A549 (cell line): ENCODE measurements at regions of chr16 and their contacts with region 1.

Region 1: DNA sequence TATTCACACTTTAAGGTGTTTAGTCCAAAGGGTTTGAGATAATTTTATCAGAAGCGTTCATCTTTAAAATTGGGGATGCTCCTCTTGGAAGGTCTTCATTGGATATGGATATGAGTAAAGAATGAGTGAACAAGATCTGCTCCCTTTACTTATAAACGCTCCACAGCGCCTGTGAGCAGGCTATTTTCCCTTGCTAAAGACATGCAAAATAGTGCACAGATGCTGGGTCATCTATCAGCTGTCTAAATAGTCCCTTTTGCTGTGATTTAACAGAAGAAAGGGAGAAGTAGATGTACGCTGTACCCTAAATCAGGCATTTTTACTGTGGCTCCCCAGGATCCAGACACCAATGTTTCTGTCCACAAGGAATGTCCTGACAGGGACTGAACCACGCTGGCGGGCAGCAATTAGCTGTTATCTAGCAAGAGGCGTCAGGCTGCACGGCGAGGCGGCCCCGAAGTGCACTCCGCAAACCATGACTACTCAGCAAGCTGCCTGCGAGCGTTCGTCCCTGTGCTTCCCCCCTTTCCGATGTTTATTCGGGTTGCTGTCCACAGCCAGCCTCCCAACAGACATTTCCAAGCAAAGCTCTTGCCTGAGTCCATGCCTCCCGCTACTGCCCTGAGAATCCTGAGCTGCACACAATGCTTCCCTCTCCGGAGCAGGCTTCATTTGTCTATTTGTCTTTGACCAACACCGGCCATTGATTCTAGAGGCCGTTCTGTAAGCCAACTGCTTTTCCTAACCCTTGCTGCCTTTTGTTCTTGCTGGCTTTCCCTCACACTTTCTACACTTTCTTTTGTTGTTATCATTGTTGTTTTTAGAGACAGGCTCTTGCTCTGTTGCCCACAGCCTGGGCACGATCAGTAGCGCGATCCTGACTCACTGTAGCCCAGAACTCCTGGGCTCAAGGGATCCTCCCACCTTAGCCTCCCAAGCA is 55.7 kb upstream of the CNEP1R1 start:
- DNase-seq: no peak
- ATAC-seq: no peak
- H3K4me3 ChIP-seq: no peak overlapping the region
- H3K27ac ChIP-seq: no peak overlapping the region
- H3K4me1 ChIP-seq: no peaks in the 10 kb centered on the region
- CTCF ChIP-seq: no peak
- EP300 ChIP-seq: no peak
- POLR2A ChIP-seq: no peak
- RAD21 ChIP-seq: no peak

Region 2: DNA sequence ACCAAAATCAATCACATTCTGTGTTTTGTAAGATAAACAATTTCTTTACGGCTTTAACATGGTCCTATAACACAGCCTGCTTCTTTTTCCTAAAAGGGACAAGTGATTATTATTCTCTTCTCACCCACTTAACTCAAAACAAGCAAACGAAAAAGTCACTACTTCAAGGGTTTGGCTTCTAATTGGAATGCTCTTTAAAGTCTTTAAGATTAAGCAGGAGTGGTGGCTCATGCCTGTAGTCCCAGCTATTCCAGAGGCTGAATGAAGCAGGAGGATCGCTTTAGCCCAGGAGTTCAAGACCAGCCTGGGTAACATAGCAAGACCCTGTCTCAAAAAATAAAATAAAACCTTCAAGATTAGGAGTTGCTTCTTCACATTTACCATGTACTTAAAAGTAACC is 10.9 kb before region 1 on chr16:
- CTCF ChIA-PET with region 1: interaction called, 11 read pairs
- POLR2A ChIA-PET with region 1: no interaction called
- DNase-seq: no peak
- ATAC-seq: no peak
- H3K4me3 ChIP-seq: no peak overlapping the region
- H3K27ac ChIP-seq: no peak overlapping the region
- H3K4me1 ChIP-seq: no peaks in the 10 kb centered on the region
- CTCF ChIP-seq: no peak
- EP300 ChIP-seq: no peak
- POLR2A ChIP-seq: no peak
- RAD21 ChIP-seq: no peak

Region 3: DNA sequence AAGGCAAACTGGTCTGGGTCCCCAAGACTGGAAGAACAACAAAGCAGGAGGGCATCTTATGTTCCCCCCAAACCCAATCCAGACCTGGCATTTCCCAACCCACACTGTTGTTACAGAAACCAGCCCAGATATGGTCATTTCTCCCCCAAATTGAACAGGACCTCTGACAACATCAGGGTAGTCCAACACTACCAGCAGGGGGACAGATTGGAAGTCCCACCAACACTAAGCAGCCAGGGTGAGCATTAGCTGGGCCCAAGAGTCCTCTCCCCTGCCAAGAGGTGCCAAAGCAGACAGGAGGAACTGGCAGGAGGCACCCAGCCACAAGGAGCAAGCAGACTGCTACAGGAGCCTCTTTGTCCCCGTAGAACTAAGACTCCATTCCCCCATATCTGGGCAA is 26.4 kb after region 1 on chr16:
- CTCF ChIA-PET with region 1: no interaction called
- POLR2A ChIA-PET with region 1: no interaction called
- DNase-seq: no peak
- ATAC-seq: peak in 1 of 2 experiments; percentile 51; a peak in 2 of 6 replicates
- H3K4me3 ChIP-seq: no peak overlapping the region
- H3K27ac ChIP-seq: no peak overlapping the region
- H3K4me1 ChIP-seq: no peaks in the 10 kb centered on the region
- CTCF ChIP-seq: no peak
- EP300 ChIP-seq: no peak
- POLR2A ChIP-seq: no peak
- RAD21 ChIP-seq: no peak